ENCODE measurements at regions of chr7 and their contacts with region 1.

Region 1: DNA sequence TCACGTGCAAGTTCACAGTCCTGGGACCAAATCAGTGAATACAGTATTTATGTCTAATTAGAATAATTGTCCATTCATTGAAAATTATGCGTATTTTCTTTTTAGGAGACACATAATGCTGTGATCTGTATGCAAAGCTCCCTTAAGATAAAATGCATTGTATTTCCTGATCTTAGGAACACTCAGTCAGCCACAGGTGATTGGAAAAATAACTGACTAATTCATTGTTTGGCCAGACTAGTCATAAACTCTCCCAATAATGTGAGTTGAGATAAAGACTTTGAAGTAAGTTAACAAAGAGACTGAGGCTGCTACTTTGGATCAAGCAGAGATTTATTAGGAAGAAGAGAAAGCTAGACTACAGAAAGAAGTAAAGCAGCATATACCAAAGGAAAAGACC is 182.2 kb downstream of the GNAI1 start:
- DNase-seq: no peak
- ATAC-seq: no peak
- H3K4me3 ChIP-seq: no peak overlapping the region
- H3K27ac ChIP-seq: no peak overlapping the region
- H3K4me1 ChIP-seq: no peaks in the 10 kb centered on the region
- H3K27me3 ChIP-seq: no peaks in the 10 kb centered on the region
- CTCF ChIP-seq: no peak
- EP300 ChIP-seq: no peak
- POLR2A ChIP-seq: no peak
- RAD21 ChIP-seq: no peak

Region 2: GRCh38 chr7:80225361-80225760 is 91.5 kb before region 1 on chr7:
- CTCF ChIA-PET with region 1: no interaction called
- POLR2A ChIA-PET with region 1: no interaction called
- in situ Hi-C with region 1: loop called (anchors 5 kb)
- intact Hi-C with region 1: no loop called
- DNase-seq: no peak
- ATAC-seq: no peak
- H3K4me3 ChIP-seq: no peak overlapping the region
- H3K27ac ChIP-seq: no peak overlapping the region
- H3K4me1 ChIP-seq: no peaks in the 10 kb centered on the region
- H3K27me3 ChIP-seq: no peaks in the 10 kb centered on the region
- CTCF ChIP-seq: no peak
- EP300 ChIP-seq: no peak
- POLR2A ChIP-seq: no peak
- RAD21 ChIP-seq: no peak

Region 3: GRCh38 chr7:80362010-80362618 is 45.3 kb after region 1 on chr7:
- CTCF ChIA-PET with region 1: no interaction called
- POLR2A ChIA-PET with region 1: no interaction called
- in situ Hi-C with region 1: no loop called
- intact Hi-C with region 1: no loop called
- DNase-seq: no peak
- ATAC-seq: no peak
- H3K4me3 ChIP-seq: no peak overlapping the region
- H3K27ac ChIP-seq: no peak overlapping the region
- H3K4me1 ChIP-seq: no peaks in the 10 kb centered on the region
- H3K27me3 ChIP-seq: no peaks in the 10 kb centered on the region
- CTCF ChIP-seq: no peak
- EP300 ChIP-seq: no peak
- POLR2A ChIP-seq: no peak
- RAD21 ChIP-seq: no peak

Region 4: DNA sequence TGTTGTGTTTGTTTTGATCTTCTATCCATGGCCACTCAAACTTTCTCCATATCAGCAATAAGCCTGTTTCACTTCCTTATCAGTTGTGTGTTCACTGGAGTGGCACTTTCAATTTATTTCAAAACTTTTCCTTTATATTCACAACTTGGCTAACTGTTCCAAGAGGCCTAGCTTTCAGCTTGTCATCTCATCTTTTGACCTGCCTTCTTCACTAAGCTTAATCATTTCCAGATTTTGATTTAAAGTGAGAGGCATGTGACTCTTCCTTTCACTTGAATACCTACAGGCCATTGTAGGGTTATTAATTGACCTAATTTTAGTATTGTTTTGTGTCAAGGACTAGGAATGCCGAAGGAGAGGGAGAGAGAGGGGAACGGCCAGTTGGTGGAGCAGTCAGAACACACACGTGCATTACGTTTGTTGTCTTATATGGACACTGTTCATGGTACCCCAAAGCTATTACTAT is 200.5 kb after region 1 on chr7:
- CTCF ChIA-PET with region 1: no interaction called
- POLR2A ChIA-PET with region 1: no interaction called
- in situ Hi-C with region 1: no loop called
- intact Hi-C with region 1: no loop called
- DNase-seq: no peak
- ATAC-seq: no peak
- H3K4me3 ChIP-seq: no peak overlapping the region
- H3K27ac ChIP-seq: no peak overlapping the region
- H3K4me1 ChIP-seq: no peaks in the 10 kb centered on the region
- H3K27me3 ChIP-seq: no peaks in the 10 kb centered on the region
- CTCF ChIP-seq: no peak
- EP300 ChIP-seq: no peak
- POLR2A ChIP-seq: no peak
- RAD21 ChIP-seq: no peak